ENCODE measurements at regions of chr22 and their contacts with region 1.

Region 1: DNA sequence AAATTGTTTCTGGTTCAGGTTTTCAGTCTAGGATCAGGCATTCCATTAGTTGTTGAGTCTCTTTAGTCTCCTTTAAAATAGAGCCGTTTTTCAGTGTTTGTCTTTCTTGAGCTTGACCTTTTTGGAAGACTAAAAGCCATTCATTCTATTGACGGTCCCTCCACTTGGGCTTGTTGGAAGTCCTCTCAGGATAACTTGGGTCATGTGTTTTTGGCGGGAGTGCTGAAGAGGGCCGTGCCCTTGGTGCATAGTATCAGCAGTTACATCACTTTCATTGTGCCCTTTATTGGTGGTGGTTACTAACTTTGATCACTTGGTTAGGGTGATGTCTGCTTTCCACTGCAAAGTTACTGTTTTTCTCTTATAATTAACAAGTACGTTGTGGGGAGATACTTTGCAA is 20.8 kb downstream of the CECR2 start:
- DNase-seq: no peak
- ATAC-seq: no peak
- H3K4me3 ChIP-seq: no peak overlapping the region
- H3K27ac ChIP-seq: no peak overlapping the region
- H3K4me1 ChIP-seq: no peaks in the 10 kb centered on the region
- H3K27me3 ChIP-seq: no peaks in the 10 kb centered on the region
- CTCF ChIP-seq: no peak
- POLR2A ChIP-seq: no peak
- RAD21 ChIP-seq: no peak

Region 2: DNA sequence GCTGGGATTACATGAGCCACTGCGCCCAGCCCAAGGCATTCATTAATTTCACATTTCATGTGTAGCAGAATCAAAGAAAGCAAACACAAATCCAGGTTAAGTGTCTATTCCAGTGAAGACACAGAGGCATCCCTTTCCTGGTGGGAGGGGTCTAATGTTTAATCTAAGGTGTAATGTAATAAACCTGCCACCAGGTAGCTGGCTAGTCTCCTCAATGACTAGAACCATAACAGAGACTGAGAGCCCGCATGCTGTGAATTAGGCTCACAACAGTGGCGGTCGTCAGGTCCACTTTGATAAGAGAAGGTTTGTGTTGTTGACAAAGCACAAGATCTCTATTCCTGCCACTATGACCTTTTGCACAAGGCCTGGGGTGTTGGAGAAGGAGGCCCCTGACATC is 106.7 kb before region 1 on chr22:
- CTCF ChIA-PET with region 1: no interaction called
- POLR2A ChIA-PET with region 1: no interaction called
- RAD21 ChIA-PET with region 1: no interaction called
- intact Hi-C with region 1: no loop called
- DNase-seq: no peak
- ATAC-seq: peak; percentile 67
- H3K4me3 ChIP-seq: no peak overlapping the region
- H3K27ac ChIP-seq: no peak overlapping the region
- H3K4me1 ChIP-seq: no peaks in the 10 kb centered on the region
- H3K27me3 ChIP-seq: no peaks in the 10 kb centered on the region
- CTCF ChIP-seq: 0 out of 6 replicates have a peak, but pooled peaks of 1 of the 3 experiments have one; percentile 6
- POLR2A ChIP-seq: no peak
- RAD21 ChIP-seq: no peak

Region 3: DNA sequence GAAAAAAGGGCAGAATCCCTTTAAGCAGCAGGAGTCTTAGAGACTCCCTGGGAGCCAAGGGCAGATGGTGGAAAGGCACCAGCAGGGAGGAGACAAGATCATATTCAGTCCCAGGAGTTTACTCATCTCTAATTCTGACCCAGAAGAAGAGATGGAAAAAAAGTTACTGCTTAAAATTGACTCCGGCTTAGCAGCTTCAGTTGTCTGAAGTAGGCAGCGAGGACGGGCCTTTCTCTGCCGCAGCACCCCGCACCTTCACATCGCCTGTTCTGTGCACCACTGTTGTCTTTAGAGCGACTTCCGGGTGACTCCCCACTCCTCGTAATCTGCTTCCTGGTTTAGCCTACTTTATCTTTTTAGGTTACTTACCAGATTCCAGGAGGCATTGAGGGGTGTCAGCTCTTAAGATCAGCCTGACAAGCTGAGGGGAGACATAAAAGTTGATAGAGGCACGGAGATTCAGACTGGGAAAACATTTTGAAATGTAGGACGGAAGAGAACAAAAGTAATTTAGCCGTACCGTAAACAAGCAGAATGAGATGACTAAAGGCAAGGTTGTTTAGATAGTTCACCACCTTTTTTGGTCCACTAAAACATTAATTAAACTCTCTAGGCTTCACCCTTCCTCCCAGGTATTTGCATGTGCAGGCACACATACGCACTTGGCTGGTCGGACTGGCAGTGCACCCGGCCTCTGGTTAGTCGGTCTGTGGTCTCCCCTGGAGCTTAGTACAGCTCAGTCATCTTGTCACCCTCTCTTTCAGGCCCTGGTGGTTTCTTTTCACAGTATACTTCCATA is 53.5 kb after region 1 on chr22:
- CTCF ChIA-PET with region 1: no interaction called
- POLR2A ChIA-PET with region 1: no interaction called
- RAD21 ChIA-PET with region 1: no interaction called
- intact Hi-C with region 1: loop called (anchors 5 kb)
- DNase-seq: no peak
- ATAC-seq: no peak
- H3K4me3 ChIP-seq: no peak overlapping the region
- H3K27ac ChIP-seq: no peak overlapping the region
- H3K4me1 ChIP-seq: peaks cover 4 to 8% of the 10 kb centered on the region in 2 experiments; a peak in 2 of 4 replicates
- H3K27me3 ChIP-seq: no peaks in the 10 kb centered on the region
- CTCF ChIP-seq: no peak
- POLR2A ChIP-seq: no peak
- RAD21 ChIP-seq: no peak

Region 4: GRCh38 chr22:17888855-17889254 is 498.8 kb after region 1 on chr22:
- CTCF ChIA-PET with region 1: no interaction called
- POLR2A ChIA-PET with region 1: no interaction called
- RAD21 ChIA-PET with region 1: no interaction called
- intact Hi-C with region 1: no loop called
- DNase-seq: no peak
- ATAC-seq: no peak
- H3K4me3 ChIP-seq: no peak overlapping the region
- H3K27ac ChIP-seq: no peak overlapping the region
- H3K4me1 ChIP-seq: no peaks in the 10 kb centered on the region; a peak in 1 of 4 replicates
- H3K27me3 ChIP-seq: no peaks in the 10 kb centered on the region
- CTCF ChIP-seq: no peak
- POLR2A ChIP-seq: no peak
- RAD21 ChIP-seq: no peak

Measured in HCT116 (cell line).